ENCODE measurements at regions of chr12 and their contacts with region 1.

Region 1: DNA sequence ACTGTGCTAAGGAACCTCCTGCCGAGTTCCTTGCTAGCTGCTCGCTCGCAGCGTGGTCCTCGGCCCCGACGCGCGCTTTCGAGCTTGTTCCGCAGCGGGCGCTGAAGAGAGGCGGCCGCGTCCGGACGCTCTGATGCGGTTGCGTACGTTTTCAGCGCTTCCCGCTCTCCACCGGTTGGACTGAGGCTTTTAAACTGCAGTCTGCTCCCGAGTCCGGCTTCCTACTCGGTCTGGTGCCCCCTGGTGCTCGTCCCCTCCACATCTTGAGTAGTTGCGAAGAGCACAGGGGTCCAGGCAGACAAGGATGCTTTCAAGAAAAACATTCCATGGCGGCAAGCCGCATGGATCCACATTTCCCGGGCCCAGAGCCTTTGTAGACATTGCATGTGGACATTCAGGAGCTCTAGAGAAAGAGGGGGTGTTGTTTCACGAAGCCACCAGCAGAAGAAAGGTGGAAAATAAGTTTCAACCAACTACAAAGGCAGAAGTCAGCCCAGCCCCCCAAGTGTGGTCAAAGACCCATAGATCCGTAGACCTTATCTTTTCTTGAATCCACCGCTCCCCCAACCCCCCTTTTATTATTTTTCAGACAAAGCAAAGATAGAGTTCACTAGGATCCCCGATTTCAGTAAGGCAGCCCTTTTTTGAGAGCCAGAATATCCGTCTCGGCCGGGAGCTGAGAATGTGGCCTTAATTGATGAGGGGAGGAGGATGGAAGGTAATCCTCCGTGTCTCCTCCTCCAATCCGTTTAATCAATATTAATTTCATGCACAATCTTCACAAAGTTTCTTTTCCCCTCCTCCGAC is 984 bp upstream of the WNK1 start:
- DNase-seq: peak; percentile 92 to 94
- ATAC-seq: peak; percentile 55 to 86 (median 72)
- H3K4me3 ChIP-seq: peak overlapping the region; percentile 0 to 94 (median 86)
- H3K27ac ChIP-seq: peak overlapping the region; percentile 81 to 99 (median 98)
- H3K4me1 ChIP-seq: peaks cover 0 to 36% (median 27%) of the 10 kb centered on the region in 9 donors
- H3K27me3 ChIP-seq: no peaks in the 10 kb centered on the region
- CTCF ChIP-seq: peak; percentile 67 to 91 (median 79)

Region 2: GRCh38 chr12:575948-576612 is 175.3 kb before region 1 on chr12:
- intact Hi-C with region 1: loop called (anchors 1 to 5 kb)
- DNase-seq: peak; percentile 68 to 87
- ATAC-seq: peak; percentile 35 to 77 (median 60)
- H3K4me3 ChIP-seq: peak overlapping the region in 5 of 10 donors; percentile 7 to 24 (median 19)
- H3K27ac ChIP-seq: peak overlapping the region; percentile 47 to 87 (median 76)
- H3K4me1 ChIP-seq: peaks cover 34 to 66% (median 56%) of the 10 kb centered on the region in 9 donors
- H3K27me3 ChIP-seq: no peaks in the 10 kb centered on the region
- CTCF ChIP-seq: peak; percentile 99 to 100 (median 100)

Region 3: GRCh38 chr12:630656-631632 is 120.5 kb before region 1 on chr12:
- intact Hi-C with region 1: loop called in 1 of 10 experiments (anchors 2 kb)
- DNase-seq: peak; percentile 61 to 76
- ATAC-seq: peak; percentile 63 to 89 (median 81)
- H3K4me3 ChIP-seq: peak overlapping the region in 7 of 10 donors; percentile 3 to 59 (median 42)
- H3K27ac ChIP-seq: peak overlapping the region; percentile 79 to 95 (median 86)
- H3K4me1 ChIP-seq: peaks cover 14 to 78% (median 60%) of the 10 kb centered on the region in 9 donors
- H3K27me3 ChIP-seq: no peaks in the 10 kb centered on the region
- CTCF ChIP-seq: no peak

Region 4: DNA sequence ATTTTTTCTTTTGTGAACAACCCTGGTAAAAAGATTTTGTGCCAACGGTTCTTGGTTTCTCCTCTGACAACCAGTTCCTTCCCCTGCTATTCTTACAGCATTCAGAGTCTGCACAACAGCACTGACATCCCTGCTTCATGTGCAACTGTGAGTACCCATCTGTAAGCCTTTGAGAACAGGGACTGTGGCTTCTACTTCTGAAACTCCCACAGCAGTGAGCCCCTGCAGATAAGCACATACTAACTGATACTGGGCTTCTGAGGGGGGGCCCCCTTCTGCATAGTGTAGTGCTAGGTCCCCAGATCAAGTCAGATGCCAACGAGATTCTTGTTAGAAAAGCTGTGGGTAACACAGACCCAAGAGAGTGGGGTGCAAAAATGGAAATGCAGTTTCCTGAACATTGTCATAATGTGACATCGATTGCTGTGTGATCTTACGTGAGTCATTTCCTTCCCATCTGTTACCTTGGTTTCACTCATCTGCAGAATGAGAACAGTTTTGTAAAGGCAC is 77.1 kb before region 1 on chr12:
- intact Hi-C with region 1: no loop called
- DNase-seq: no peak
- ATAC-seq: peak in 5 of 8 donors; percentile 25 to 46 (median 32)
- H3K4me3 ChIP-seq: no peak overlapping the region
- H3K27ac ChIP-seq: peak overlapping the region in 1 of 10 donors; percentile 70
- H3K4me1 ChIP-seq: peaks cover 0 to 24% (median 0%) of the 10 kb centered on the region in 9 donors
- H3K27me3 ChIP-seq: no peaks in the 10 kb centered on the region
- CTCF ChIP-seq: no peak

Region 5: GRCh38 chr12:712172-712863 is 39.1 kb before region 1 on chr12:
- intact Hi-C with region 1: loop called in 1 of 10 experiments (anchors 5 kb)
- DNase-seq: no peak
- ATAC-seq: peak in 1 of 8 donors; percentile 7
- H3K4me3 ChIP-seq: no peak overlapping the region
- H3K27ac ChIP-seq: peak overlapping the region in 8 of 10 donors; percentile 40 to 92 (median 70)
- H3K4me1 ChIP-seq: peaks cover 0 to 26% (median 6%) of the 10 kb centered on the region in 9 donors
- H3K27me3 ChIP-seq: no peaks in the 10 kb centered on the region
- CTCF ChIP-seq: no peak

Region 6: DNA sequence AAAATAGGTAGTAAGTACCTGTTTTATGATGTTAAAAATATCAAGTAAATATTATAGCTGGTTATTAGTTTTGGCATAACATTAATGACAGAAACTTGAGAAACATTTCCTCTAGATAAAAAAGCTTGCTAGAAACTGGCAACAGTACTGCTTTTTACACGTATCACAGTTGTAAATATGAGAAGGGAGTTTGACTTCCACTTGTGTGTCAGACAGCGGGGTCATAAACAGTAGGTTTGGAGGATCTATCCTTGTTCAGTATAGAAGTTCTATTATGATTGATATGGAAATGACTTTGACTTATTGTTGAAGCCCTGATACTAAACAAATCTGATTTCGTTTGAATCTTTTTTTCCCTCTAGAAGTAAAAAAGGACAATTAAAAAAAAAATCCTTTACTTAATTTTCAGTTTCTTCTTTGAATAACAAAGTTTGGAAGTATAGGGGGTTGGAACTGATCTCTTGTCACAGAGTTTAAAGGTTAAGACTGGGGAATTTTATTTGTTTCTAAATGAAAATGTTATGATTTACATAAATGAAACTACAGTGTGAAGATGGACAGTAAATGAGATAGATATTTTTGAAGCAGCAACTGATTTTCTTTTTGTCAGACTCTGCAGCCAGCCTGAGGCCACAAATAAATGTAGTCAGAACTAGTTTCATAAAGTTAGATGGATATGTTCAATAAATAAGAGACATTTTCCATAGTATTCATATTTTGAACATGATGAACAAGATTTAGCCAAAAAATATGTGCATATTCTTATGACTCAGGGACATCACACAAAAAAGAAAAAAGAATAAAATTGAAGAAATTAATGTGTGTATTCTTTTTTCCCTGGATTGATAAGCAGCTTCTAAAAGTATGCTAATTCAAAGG is 51.1 kb after region 1 on chr12:
- intact Hi-C with region 1: loop called in 1 of 10 experiments (anchors 5 kb)
- DNase-seq: no peak
- ATAC-seq: no peak
- H3K4me3 ChIP-seq: no peak overlapping the region
- H3K27ac ChIP-seq: peak overlapping the region in 2 of 10 donors; percentile 2 to 17
- H3K4me1 ChIP-seq: peaks cover 2 to 87% (median 63%) of the 10 kb centered on the region in 9 donors
- H3K27me3 ChIP-seq: no peaks in the 10 kb centered on the region
- CTCF ChIP-seq: no peak

Region 7: DNA sequence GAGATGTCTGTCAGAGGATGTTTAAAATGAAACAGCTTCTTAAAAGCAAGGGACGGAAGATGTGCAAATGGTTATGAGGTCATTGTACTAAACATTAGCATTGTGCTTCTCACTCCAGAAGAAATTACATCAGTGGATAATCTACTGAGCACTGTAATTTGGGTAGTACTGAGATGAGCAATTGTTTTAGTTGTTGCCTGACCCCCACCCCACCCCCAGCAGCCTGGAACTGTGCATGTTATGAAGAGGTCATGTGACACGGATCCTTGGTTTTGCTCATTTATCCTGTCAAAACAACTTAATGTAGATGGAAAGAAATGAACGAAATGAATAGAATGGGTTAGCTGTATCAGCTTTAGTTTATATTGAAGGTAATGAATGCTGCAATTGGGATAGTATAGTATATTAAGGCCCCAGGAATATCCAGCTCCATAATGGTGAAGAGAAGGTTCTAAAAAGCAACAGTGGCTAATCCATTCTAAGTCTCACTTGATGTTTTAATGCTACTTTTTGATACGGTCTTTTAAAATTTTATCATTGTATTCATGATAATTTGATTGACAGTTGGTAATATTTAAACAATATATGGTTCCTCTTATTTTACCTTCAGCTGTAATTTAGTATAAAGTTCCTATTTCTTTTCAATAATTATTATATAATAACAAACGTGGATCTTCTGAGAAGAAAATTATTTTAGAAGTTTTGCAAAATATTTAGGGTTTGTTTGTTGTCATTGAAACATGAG is 59.4 kb after region 1 on chr12:
- intact Hi-C with region 1: loop called in 7 of 10 experiments (anchors 5 to 10 kb)
- DNase-seq: no peak
- ATAC-seq: peak in 1 of 8 donors; percentile 34
- H3K4me3 ChIP-seq: no peak overlapping the region
- H3K27ac ChIP-seq: no peak overlapping the region
- H3K4me1 ChIP-seq: peaks cover 0 to 77% (median 54%) of the 10 kb centered on the region in 9 donors
- H3K27me3 ChIP-seq: no peaks in the 10 kb centered on the region
- CTCF ChIP-seq: no peak

Measured in heart right ventricle (tissue), 16 donors.